ENCODE measurements at regions of chr18 and their contacts with region 1.

Region 1: DNA sequence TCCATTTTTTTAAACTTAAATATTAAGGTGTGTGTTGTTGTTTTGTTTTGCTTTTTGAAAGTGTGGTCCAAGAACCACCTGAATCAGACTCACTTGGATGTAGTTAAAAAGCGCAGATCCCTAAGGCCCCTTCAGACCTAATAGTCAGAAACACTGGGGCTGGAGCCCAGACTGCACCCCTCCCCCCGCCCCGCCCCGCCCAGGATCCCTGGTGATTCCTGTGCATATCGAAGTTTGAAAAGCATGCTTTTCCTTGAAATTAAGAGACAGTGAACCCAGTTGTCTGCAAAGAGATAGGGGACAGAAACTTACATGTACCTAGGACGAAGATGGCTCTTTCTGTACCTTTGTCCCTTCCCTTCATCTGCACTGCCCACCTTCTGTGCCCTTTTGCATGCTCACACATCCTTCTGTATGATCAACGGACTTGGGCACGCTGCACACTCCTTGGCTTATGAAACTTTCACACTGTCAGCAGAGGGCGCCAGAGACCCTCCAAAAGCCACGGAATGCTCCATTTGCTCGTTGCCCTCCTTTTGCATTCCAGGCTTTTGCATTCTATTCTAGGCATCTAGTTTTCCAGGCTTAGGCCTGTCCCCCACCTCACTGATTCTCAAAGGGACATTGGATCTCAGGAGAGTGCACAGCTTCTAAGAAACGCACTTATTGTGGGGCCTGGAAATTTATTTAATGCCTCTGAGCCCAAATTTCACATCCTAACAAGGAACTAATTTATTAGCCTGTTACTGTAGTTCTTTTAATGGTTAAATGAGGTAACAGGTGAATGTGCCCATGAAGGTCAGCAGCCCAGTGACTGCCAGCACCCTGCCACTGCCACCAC is 32.8 kb upstream of the SLC14A1 start:
- DNase-seq: peak; percentile 89
- H3K4me3 Mint-ChIP-seq: no peak overlapping the region
- H3K27ac Mint-ChIP-seq: no peak overlapping the region
- H3K4me1 Mint-ChIP-seq: peaks cover 36% of the 10 kb centered on the region
- H3K27me3 Mint-ChIP-seq: no peaks in the 10 kb centered on the region

Region 2: GRCh38 chr18:45621061-45621511 is 70.1 kb before region 1 on chr18:
- CTCF ChIA-PET with region 1: interaction called, 4 read pairs
- intact Hi-C with region 1: loop called (anchors 2 kb)
- DNase-seq: peak; percentile 51
- H3K4me3 Mint-ChIP-seq: no peak overlapping the region
- H3K27ac Mint-ChIP-seq: no peak overlapping the region
- H3K4me1 Mint-ChIP-seq: no peaks in the 10 kb centered on the region
- H3K27me3 Mint-ChIP-seq: no peaks in the 10 kb centered on the region

Region 3: DNA sequence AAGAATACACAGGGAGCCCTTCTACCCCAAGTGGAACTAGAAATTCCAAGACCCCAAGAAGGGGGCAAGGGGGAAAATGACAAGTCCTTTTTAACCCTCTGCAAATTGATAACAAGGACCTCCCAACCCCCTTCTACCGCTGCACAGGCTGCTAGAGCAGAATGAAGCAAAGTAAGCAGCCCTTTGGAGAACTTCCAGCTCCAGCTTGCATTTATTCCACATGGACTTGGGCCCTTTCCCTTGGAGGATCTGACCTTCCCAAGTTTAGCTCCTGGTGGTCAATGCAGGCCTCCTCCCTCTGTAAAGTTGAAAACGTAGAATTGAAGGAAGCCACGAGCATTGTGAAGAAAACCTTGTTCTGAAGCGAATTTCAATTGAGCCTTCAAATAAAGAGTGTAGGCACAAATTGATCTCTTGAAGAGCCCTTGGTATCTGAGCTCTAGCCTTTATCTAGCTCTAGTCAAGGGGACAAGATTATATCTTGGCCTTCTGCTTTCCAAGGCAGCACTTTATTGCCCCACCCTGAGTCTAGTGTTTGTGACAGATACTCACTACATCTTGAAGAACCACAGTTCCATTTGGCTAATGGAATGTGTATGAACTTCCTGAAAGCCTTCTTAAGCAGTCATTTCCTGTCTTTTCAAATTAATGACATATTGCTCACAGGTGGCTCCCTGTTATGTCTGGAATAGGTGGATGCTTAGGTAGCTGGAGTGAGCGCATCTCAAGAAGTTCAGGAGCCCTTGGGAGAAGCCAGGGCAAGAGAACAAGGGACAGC is 38.7 kb before region 1 on chr18:
- CTCF ChIA-PET with region 1: no interaction called
- intact Hi-C with region 1: no loop called
- DNase-seq: no peak
- H3K4me3 Mint-ChIP-seq: no peak overlapping the region
- H3K27ac Mint-ChIP-seq: no peak overlapping the region
- H3K4me1 Mint-ChIP-seq: peaks cover 7% of the 10 kb centered on the region
- H3K27me3 Mint-ChIP-seq: no peaks in the 10 kb centered on the region

Region 4: DNA sequence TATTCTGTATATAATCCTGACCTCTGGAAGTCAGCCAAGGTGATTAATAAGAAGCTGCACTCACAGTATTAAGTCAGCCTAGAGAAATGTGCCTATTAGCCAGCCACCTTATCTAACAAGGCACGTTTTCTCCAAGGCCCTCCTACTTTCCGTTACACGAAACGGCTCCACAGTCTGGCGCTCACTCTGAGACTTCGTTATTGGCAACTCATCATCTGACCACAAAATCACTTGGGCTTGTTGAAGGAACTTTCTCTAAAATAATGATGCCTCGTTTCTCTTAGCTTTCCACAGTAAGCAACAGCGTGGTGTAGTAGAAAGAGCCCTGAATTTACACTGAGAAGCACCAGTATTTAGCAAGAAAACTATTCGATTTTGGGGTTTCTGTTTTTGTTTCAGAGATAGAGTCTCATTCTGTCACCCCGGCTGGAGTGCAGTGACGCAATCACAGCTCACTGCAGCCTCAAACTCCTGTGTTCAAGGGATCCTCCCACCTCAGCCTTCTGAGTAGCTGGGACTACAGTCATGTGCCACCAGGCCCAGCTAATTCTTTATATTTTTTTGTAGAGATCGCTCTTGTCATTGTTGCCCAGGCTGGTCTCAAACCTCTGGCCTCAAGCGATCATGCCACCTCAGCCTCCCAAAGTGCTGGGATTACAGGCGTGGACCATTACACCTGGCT is 20.8 kb before region 1 on chr18:
- CTCF ChIA-PET with region 1: interaction called, 159 read pairs
- intact Hi-C with region 1: loop called (anchors 1 kb)
- DNase-seq: peak; percentile 76
- H3K4me3 Mint-ChIP-seq: peak overlapping the region; percentile 56
- H3K27ac Mint-ChIP-seq: peak overlapping the region; percentile 81
- H3K4me1 Mint-ChIP-seq: peaks cover 61% of the 10 kb centered on the region
- H3K27me3 Mint-ChIP-seq: no peaks in the 10 kb centered on the region

Region 5: GRCh38 chr18:45722899-45723298 is 31.7 kb after region 1 on chr18:
- CTCF ChIA-PET with region 1: interaction called, 5 read pairs
- intact Hi-C with region 1: loop called (anchors 2 kb)
- DNase-seq: peak; percentile 87
- H3K4me3 Mint-ChIP-seq: no peak overlapping the region
- H3K27ac Mint-ChIP-seq: no peak overlapping the region
- H3K4me1 Mint-ChIP-seq: no peaks in the 10 kb centered on the region
- H3K27me3 Mint-ChIP-seq: peaks cover 5% of the 10 kb centered on the region

Region 6: DNA sequence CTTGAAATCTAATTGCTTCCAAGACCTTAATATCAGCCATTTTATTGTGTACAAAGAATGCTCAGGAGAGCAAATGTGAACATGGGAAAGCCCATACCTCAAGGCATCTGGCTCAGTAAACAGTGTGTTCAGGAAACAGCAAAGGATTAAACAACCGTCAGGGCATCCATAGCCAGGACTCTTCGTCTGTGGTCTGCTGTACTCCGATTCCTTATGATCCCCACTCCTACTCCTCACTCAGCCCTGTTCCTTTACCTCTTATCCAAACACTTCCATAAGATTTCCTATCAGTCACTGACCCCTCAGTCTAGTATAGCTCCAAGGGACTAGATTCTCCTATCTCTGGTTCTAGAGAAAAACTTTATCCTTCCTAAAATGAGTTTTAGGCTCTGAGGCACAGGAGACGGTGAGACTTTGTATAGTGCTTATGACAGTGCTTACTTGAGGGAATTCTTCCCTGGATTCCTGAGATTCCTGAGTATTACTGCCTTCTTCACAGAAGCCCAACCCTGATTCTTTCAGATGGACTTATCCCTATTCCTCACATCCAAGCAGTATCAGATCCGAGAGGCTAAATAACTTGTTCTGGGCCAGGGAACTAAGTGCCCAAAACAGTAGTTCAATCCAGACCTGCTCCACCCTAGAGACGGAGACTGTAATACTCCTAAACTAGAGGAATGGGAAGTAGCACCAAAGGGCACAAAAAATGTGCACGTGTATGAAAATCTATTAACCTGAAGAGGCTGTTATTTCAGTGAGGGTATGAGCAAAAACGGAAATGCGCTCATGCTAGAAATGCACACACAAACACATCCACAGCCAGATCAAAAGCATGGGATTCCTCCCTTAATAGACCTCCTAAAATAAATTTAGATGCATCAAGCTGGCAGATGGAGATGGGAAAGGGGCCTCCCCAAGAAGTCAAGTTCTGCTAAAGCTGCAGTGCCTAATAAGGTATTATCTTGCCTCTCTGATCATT is 92.2 kb after region 1 on chr18:
- CTCF ChIA-PET with region 1: no interaction called
- intact Hi-C with region 1: no loop called
- DNase-seq: no peak
- H3K4me3 Mint-ChIP-seq: no peak overlapping the region
- H3K27ac Mint-ChIP-seq: no peak overlapping the region
- H3K4me1 Mint-ChIP-seq: peaks cover 5% of the 10 kb centered on the region
- H3K27me3 Mint-ChIP-seq: no peaks in the 10 kb centered on the region

Region 7: GRCh38 chr18:45839414-45840395 is 148.5 kb after region 1 on chr18:
- CTCF ChIA-PET with region 1: interaction called, 4 read pairs
- intact Hi-C with region 1: loop called (anchors 1 kb)
- DNase-seq: peak; percentile 49
- H3K4me3 Mint-ChIP-seq: no peak overlapping the region
- H3K27ac Mint-ChIP-seq: no peak overlapping the region
- H3K4me1 Mint-ChIP-seq: peaks cover 11% of the 10 kb centered on the region
- H3K27me3 Mint-ChIP-seq: peaks cover 28% of the 10 kb centered on the region

Region 8: GRCh38 chr18:45910405-45911023 is 219.3 kb after region 1 on chr18:
- CTCF ChIA-PET with region 1: interaction called, 6 read pairs
- intact Hi-C with region 1: loop called (anchors 1 kb)
- DNase-seq: peak; percentile 76
- H3K4me3 Mint-ChIP-seq: no peak overlapping the region
- H3K27ac Mint-ChIP-seq: no peak overlapping the region
- H3K4me1 Mint-ChIP-seq: no peaks in the 10 kb centered on the region
- H3K27me3 Mint-ChIP-seq: no peaks in the 10 kb centered on the region

Region 9: GRCh38 chr18:45967007-45967706 is 276.0 kb after region 1 on chr18 and contains the start of gene EPG5:
- CTCF ChIA-PET with region 1: interaction called, 4 read pairs
- intact Hi-C with region 1: loop called (anchors 2 kb)
- DNase-seq: peak; percentile 98
- H3K4me3 Mint-ChIP-seq: peak within 1 kb of the TSS; percentile 97
- H3K27ac Mint-ChIP-seq: peak within 1 kb of the TSS; percentile 86
- H3K4me1 Mint-ChIP-seq: peaks cover 33% of the 10 kb centered on the region
- H3K27me3 Mint-ChIP-seq: no peaks in the 10 kb centered on the region
- total RNA-seq, gene EPG5: 18.3 to 21.2 TPM

Measured in activated naive CD4-positive, alpha-beta T cell treated with anti-CD3 and anti-CD28 coated beads for 36 hours (primary cell).